ENCODE measurements at regions of chr4 and their contacts with region 1.

Region 1: GRCh38 chr4:124334119-124334518 is 378.4 kb downstream of the ANKRD50 start:
- DNase-seq: no peak
- ATAC-seq: peak; percentile 97
- H3K4me3 Mint-ChIP-seq: no peak overlapping the region
- H3K27ac Mint-ChIP-seq: no peak overlapping the region
- H3K4me1 Mint-ChIP-seq: peaks cover 5% of the 10 kb centered on the region; the same call in 1 of the 2 replicates
- H3K27me3 Mint-ChIP-seq: no peaks in the 10 kb centered on the region
- CTCF ChIP-seq: no peak

Region 2: DNA sequence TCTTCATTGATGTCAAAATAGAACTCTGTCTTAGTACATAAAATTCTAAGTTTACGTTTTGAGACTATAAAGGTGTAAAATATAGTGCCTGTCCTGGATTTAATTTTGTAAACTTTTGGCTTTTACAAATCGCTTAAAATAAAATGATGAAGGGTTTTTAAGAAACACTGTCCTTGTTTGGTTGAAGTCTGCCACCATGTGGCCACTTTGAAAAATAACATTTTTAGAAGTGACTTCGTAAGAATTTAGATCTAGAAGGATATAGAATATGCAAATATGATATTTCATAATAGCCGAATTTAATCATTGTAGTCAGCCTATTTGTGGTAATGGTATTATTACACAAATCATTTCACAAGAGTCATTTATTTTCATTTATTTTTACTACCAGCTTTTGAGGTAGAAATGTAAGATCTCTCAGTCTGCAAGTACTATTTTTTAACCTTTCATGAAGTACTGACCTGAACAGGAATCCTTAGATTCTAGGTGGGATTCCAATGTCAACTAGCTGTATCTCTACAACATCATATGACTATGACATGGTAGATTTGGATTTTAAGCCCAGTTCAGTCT is 949.7 kb after region 1 on chr4:
- CTCF ChIA-PET with region 1: interaction called, 17 read pairs
- POLR2A ChIA-PET with region 1: no interaction called
- DNase-seq: no peak
- ATAC-seq: no peak
- H3K4me3 Mint-ChIP-seq: no peak overlapping the region
- H3K27ac Mint-ChIP-seq: no peak overlapping the region
- H3K4me1 Mint-ChIP-seq: peaks cover 12% of the 10 kb centered on the region
- H3K27me3 Mint-ChIP-seq: no peaks in the 10 kb centered on the region
- CTCF ChIP-seq: peak; percentile 37

Measured in WTC11 (cell line).